ENCODE measurements at regions of chr10 and their contacts with region 1.

Region 1: GRCh38 chr10:63629363-63630084 is 108.3 kb downstream of the REEP3 start:
- DNase-seq: peak; percentile 86 to 97
- ATAC-seq: peak; percentile 70 to 86
- H3K4me3 ChIP-seq: peak overlapping the region; percentile 70
- H3K27ac ChIP-seq: peak overlapping the region; percentile 95 to 99
- H3K4me1 ChIP-seq: peaks cover 24% of the 10 kb centered on the region
- CTCF ChIP-seq: peak; percentile 89
- EP300 ChIP-seq: peak in 1 of 2 experiments; percentile 18; a peak in 1 of 5 replicates
- POLR2A ChIP-seq: no peak
- RAD21 ChIP-seq: peak; percentile 93 to 94

Region 2: GRCh38 chr10:63166742-63167258 is 462.7 kb before region 1 on chr10:
- CTCF ChIA-PET with region 1: interaction called, 56 read pairs
- POLR2A ChIA-PET with region 1: interaction called, 11 read pairs
- DNase-seq: peak; percentile 31 to 84
- ATAC-seq: peak; percentile 87 to 91
- H3K4me3 ChIP-seq: no peak overlapping the region
- H3K27ac ChIP-seq: no peak overlapping the region
- H3K4me1 ChIP-seq: no peaks in the 10 kb centered on the region
- CTCF ChIP-seq: peak; percentile 82
- EP300 ChIP-seq: no peak
- POLR2A ChIP-seq: no peak
- RAD21 ChIP-seq: peak; percentile 79 to 82

Region 3: DNA sequence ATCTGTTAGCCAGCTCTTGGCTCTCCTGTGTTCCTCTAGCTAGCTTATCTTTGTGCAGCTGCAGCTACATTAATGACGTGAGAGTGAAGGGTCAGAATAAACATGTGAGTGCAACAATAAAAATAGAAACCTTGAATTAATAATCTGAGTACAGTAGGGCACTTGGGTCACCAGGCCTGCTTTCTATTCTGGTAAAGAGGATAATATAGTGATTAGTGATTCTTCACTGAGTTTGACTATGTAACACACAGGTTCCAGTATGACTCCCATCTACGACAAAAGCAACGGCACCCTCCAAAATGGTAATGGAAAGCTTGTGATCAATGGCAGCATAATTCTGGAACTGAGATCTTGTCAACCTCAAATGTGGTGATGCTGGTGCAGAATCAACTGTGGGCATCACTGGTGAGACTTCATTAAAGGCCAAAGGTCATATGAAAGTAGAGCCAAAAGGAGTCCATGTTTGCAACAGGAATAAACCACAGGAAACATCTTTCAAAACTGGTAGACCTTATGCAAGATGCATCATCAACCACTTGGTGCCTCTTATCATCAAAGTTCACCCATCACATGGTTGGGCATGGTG is 418.8 kb before region 1 on chr10:
- CTCF ChIA-PET with region 1: interaction called, 39 read pairs
- POLR2A ChIA-PET with region 1: no interaction called
- DNase-seq: no peak
- ATAC-seq: no peak
- H3K4me3 ChIP-seq: no peak overlapping the region
- H3K27ac ChIP-seq: no peak overlapping the region
- H3K4me1 ChIP-seq: no peaks in the 10 kb centered on the region
- CTCF ChIP-seq: no peak
- EP300 ChIP-seq: no peak
- POLR2A ChIP-seq: no peak
- RAD21 ChIP-seq: no peak

Region 4: DNA sequence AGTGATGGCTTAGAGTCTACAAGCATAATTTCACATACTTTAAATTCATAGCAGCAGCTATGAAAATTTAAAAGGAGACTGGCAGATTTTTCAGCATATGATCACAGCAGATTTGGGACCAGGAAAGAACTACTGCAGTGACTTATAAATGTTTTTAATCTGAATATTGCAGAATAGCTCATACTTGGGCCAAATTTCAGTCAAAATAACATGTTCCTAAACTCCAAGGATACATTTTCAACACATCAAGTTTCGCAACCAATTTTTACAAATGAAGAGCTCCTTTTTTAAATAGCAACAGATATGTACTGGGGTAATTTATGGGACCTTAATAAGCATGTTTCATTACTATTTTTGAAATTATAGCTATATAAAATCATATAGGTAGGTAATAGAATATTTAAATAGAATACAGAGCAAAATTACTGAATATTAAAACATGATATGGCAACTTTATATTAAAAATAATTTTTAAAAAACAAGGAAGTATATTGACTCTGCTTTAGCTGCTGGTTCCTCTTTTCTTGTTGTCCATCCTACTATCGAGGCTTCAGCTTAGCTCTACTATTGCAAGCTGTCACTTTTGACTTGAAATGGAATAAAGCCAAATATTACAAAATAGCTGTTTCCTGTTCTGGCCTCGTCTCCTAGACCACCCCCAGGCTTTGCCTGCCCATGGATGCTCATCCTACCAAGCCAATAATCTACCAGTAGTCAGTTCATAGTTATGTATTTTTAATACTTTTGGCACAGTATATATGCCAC is 373.3 kb before region 1 on chr10:
- CTCF ChIA-PET with region 1: interaction called, 16 read pairs
- POLR2A ChIA-PET with region 1: interaction called, 6 read pairs
- DNase-seq: no peak
- ATAC-seq: no peak
- H3K4me3 ChIP-seq: no peak overlapping the region
- H3K27ac ChIP-seq: no peak overlapping the region
- H3K4me1 ChIP-seq: peaks cover 39% of the 10 kb centered on the region
- CTCF ChIP-seq: no peak
- EP300 ChIP-seq: no peak
- POLR2A ChIP-seq: no peak
- RAD21 ChIP-seq: no peak

Region 5: GRCh38 chr10:63465293-63466143 is 164.0 kb before region 1 on chr10 and contains the start of gene JMJD1C:
- CTCF ChIA-PET with region 1: interaction called, 11 read pairs
- POLR2A ChIA-PET with region 1: interaction called, 4 read pairs
- DNase-seq: peak; percentile 67 to 89
- ATAC-seq: peak; percentile 91
- H3K4me3 ChIP-seq: peak within 1 kb of the TSS; percentile 82
- H3K27ac ChIP-seq: peak within 1 kb of the TSS; percentile 85 to 91
- H3K4me1 ChIP-seq: peaks cover 28% of the 10 kb centered on the region
- CTCF ChIP-seq: no peak; the same call in 2 of the 3 replicates
- EP300 ChIP-seq: no peak
- POLR2A ChIP-seq: peak; percentile 39
- RAD21 ChIP-seq: peak in 1 of 2 experiments; percentile 8; a peak in 1 of 5 replicates
- polyA plus RNA-seq, gene JMJD1C: 47.2 and 51.0 TPM in 2 replicates

Region 6: DNA sequence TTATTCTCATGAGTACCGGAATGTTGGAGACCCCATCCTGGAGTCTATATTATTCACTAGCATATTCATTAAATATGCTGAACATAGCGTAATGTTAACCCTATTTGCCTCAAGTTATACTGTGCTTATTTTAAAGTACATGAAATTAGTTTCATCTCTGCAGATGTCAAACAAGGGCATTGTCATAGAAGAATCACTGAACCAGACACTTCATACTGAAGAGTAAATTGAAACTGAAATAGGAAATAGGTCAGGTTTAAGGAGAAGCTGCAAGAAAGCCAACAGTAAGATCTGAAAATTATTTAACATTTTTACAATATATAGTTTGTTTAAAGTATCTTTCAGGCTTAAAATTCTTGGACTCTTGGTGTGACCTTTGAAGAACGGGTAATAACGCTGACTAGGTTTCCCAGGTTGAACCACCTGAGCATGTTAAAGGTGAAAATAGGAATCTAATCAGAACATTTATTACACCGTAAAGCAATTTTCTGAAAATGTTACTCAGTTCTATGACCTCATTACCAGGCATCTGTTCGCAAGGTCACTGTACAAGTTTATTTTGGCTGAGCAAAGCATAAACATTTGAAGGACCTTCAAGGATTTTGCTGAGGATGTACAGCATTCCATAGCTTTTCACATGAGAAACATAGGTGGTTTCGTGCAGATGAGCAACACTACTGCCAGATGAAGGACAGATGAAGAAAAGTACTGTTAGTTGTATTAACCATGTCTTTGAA is 25.6 kb before region 1 on chr10:
- CTCF ChIA-PET with region 1: no interaction called
- POLR2A ChIA-PET with region 1: no interaction called
- DNase-seq: no peak
- ATAC-seq: no peak
- H3K4me3 ChIP-seq: no peak overlapping the region
- H3K27ac ChIP-seq: no peak overlapping the region
- H3K4me1 ChIP-seq: 0 out of 3 replicates have a peak, but pooled peaks cover 5% of the 10 kb centered on the region
- CTCF ChIP-seq: no peak
- EP300 ChIP-seq: no peak
- POLR2A ChIP-seq: no peak
- RAD21 ChIP-seq: no peak

Region 7: GRCh38 chr10:63614371-63614891 is 15.1 kb before region 1 on chr10:
- CTCF ChIA-PET with region 1: interaction called, 42 read pairs
- POLR2A ChIA-PET with region 1: interaction called, 3 read pairs
- DNase-seq: no peak
- ATAC-seq: no peak
- H3K4me3 ChIP-seq: no peak overlapping the region
- H3K27ac ChIP-seq: 0 out of 6 replicates have a peak overlapping the region, but pooled peaks of 1 of the 2 experiments have one; percentile 7
- H3K4me1 ChIP-seq: no peaks in the 10 kb centered on the region
- CTCF ChIP-seq: no peak
- EP300 ChIP-seq: no peak
- POLR2A ChIP-seq: no peak
- RAD21 ChIP-seq: no peak

Measured in A549 (cell line).